Heart right ventricle (tissue), 16 donors: ENCODE measurements at regions of chr17 and their contacts with region 1.

Region 1: DNA sequence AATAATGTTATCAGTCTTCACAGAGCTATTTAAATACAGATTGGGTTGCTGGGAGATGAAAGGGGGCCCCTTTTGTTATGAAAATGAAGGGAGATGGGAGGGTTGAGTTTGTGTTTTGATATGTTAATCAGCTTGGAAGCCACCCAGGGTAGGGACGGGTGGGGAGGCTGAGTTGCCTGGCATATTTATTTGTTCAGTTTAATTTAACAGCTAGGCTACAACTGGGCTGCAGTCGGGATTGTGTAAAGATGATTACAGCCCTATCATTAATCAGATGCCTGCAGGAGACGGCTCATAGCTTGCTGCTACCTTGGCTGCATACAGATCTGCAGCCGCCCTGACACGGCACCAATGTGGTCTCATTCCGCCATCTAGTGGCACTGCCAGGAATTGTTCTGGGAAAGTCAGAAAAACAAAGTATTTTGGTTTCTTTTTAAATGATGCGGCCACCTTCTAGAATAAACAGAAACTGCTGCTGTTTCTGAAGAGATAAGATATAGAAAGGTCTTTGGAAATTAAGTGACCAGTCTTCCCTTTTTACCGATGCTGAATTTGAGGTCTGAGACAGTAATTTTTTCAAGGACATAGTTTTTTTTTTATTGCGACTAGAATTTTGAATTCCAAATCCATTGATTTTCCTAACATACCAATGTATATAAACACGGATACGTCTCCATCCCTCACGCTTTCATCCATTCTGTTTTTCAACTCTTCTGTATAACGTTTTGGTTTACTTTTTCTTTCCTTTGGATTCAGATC is 458.0 kb upstream of the ASIC2 start:
- DNase-seq: peak; percentile 32 to 58
- ATAC-seq: peak in 6 of 8 donors; percentile 54 to 84 (median 70)
- H3K4me3 ChIP-seq: peak overlapping the region in 4 of 10 donors; percentile 14 to 27 (median 20)
- H3K27ac ChIP-seq: no peak overlapping the region
- H3K4me1 ChIP-seq: peaks cover 0 to 8% (median 0%) of the 10 kb centered on the region in 9 donors
- H3K27me3 ChIP-seq: peaks cover 0 to 79% (median 35%) of the 10 kb centered on the region in 7 donors
- CTCF ChIP-seq: peak; percentile 85 to 97 (median 93)

Region 2: GRCh38 chr17:33038740-33039139 is 712.4 kb before region 1 on chr17:
- intact Hi-C with region 1: loop called in 2 of 10 experiments (anchors 5 to 10 kb)
- DNase-seq: peak; percentile 36 to 48
- ATAC-seq: peak in 7 of 8 donors; percentile 53 to 85 (median 76)
- H3K4me3 ChIP-seq: no peak overlapping the region
- H3K27ac ChIP-seq: peak overlapping the region in 1 of 10 donors; percentile 24
- H3K4me1 ChIP-seq: peaks cover 3 to 26% (median 22%) of the 10 kb centered on the region in 9 donors
- H3K27me3 ChIP-seq: peaks cover 0 to 35% (median 10%) of the 10 kb centered on the region in 7 donors
- CTCF ChIP-seq: peak; percentile 43 to 79 (median 68)

Region 3: GRCh38 chr17:33335491-33336173 is 415.5 kb before region 1 on chr17:
- intact Hi-C with region 1: no loop called
- DNase-seq: no peak
- ATAC-seq: no peak
- H3K4me3 ChIP-seq: no peak overlapping the region
- H3K27ac ChIP-seq: no peak overlapping the region
- H3K4me1 ChIP-seq: no peaks in the 10 kb centered on the region
- H3K27me3 ChIP-seq: peaks cover 0 to 58% (median 26%) of the 10 kb centered on the region in 7 donors
- CTCF ChIP-seq: no peak

Region 4: DNA sequence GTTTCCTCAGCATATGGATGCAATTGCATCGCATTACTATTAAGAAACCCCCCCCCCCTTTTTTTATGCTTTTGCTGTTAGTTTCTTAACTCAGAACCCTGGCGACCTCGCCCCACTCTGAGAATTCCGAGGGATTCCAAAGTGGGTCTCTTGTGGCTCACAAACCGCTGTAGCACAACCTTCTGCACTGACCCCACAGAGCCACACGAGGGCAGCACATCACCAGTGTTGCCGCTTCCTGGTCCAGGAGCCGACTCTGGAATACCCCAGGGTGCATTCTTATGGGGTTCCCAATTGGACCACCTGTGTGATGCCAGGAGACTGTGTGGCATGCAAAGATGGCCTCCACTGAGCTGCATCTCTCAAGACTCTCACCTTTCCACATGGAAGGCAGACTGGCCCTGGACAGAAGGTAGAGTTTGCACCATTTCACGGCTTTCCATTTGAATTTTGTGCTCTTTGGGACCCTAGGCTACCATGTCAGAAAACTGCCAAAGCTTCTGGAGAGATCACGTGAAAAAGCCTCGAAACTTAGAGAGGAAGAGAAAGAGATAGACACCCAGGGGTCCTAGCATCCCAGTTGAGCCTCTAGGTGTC is 25.3 kb before region 1 on chr17:
- intact Hi-C with region 1: loop called in 2 of 10 experiments (anchors 1 to 2 kb)
- DNase-seq: peak; percentile 10 to 29
- ATAC-seq: peak in 1 of 8 donors; percentile 17
- H3K4me3 ChIP-seq: no peak overlapping the region
- H3K27ac ChIP-seq: no peak overlapping the region
- H3K4me1 ChIP-seq: no peaks in the 10 kb centered on the region
- H3K27me3 ChIP-seq: peaks cover 0 to 65% (median 37%) of the 10 kb centered on the region in 7 donors
- CTCF ChIP-seq: peak; percentile 15 to 67 (median 58)